SK-N-SH (cell line): ENCODE measurements at regions of chr9 and their contacts with region 1.

Region 1: GRCh38 chr9:109903515-109904138 is 123.6 kb downstream of the PALM2AKAP2 start:
- DNase-seq: peak; percentile 62
- H3K4me3 ChIP-seq: no peak overlapping the region; a peak in 1 of 4 replicates
- H3K27ac ChIP-seq: 0 out of 4 replicates have a peak overlapping the region, but pooled peaks of 1 of the 2 experiments have one; percentile 55
- H3K4me1 ChIP-seq: peaks cover 3 to 18% of the 10 kb centered on the region in 2 experiments
- H3K27me3 ChIP-seq: no peaks in the 10 kb centered on the region
- CTCF ChIP-seq: peak; percentile 93
- EP300 ChIP-seq: no peak
- RAD21 ChIP-seq: peak; percentile 93

Region 2: GRCh38 chr9:109717342-109717741 is 186.3 kb before region 1 on chr9:
- CTCF ChIA-PET with region 1: no interaction called
- POLR2A ChIA-PET with region 1: no interaction called
- DNase-seq: no peak
- H3K4me3 ChIP-seq: no peak overlapping the region
- H3K27ac ChIP-seq: no peak overlapping the region
- H3K4me1 ChIP-seq: no peaks in the 10 kb centered on the region
- H3K27me3 ChIP-seq: no peaks in the 10 kb centered on the region; the same call in 1 of the 2 replicates
- CTCF ChIP-seq: no peak
- EP300 ChIP-seq: no peak
- RAD21 ChIP-seq: no peak

Region 3: DNA sequence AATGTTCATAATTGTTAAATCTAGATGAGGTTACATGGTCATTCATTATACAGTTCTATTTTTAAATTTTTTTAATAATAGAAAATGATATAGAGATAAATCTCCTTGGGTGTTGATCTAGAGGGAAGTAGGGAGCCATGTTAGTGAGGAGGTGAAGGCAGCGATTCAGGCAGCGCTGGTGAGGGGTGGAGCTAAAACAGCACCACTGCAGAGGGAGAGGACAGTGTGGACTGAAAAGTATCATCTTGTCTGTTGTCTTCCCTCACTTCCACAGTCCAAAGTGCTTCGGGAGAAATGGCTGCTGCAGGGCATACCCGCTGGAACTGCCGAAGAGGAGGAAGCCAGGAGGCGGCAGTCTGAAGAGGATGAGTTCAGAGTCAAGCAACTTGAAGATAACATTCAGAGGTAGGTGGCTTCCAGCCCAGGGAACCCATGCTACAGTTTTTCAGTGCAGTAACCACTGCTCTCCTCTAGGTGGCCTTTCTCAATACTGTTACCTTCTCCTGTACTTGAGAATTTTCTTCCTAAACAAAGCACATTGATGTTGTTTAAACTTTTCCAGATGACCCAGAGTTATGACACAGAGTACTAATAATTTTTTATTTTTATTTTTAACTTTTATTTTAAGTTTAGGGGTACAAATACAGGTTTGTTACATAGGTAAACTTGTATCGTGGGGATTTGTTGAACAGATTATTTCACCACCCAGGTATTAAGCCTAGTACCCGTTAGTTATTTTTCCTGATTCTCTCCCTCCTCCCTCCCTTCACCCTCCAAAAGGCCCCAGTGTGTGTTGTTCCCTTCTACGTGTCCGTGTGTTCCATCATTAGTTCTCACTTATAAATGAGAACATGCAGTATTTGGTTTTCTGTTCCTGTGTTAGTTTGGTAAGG is 23.1 kb before region 1 on chr9:
- CTCF ChIA-PET with region 1: interaction called, 11 read pairs
- POLR2A ChIA-PET with region 1: no interaction called
- DNase-seq: peak; percentile 28
- H3K4me3 ChIP-seq: peak overlapping the region in 1 of 2 experiments; percentile 6; a peak in 1 of 4 replicates
- H3K27ac ChIP-seq: no peak overlapping the region
- H3K4me1 ChIP-seq: no peaks in the 10 kb centered on the region; a peak in 1 of 4 replicates
- H3K27me3 ChIP-seq: no peaks in the 10 kb centered on the region
- CTCF ChIP-seq: peak; percentile 72
- EP300 ChIP-seq: no peak
- RAD21 ChIP-seq: peak; percentile 27; the same call in 1 of the 2 replicates

Region 4: DNA sequence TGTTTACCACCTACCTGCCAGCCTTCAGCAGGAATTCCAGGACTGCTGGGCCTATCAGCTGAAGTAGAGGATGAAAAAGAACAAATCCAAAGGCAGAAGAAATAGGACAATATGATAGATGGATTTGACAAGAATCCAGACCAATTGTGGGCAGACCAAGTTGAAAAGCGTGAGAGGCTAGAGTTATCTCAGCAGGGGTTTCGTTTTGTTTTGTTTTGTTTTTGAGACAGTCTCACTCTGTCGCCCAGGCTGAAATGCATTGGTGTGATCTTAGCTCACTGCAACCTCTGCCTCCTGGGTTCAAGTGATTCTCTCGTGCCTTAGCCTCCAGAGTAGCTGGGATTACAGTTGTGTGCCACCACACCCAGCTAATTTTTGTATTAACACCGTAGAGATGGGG is 10.4 kb before region 1 on chr9:
- CTCF ChIA-PET with region 1: interaction called, 13 read pairs
- POLR2A ChIA-PET with region 1: no interaction called
- DNase-seq: no peak
- H3K4me3 ChIP-seq: no peak overlapping the region
- H3K27ac ChIP-seq: peak overlapping the region in 1 of 2 experiments; percentile 80; a peak in 1 of 4 replicates
- H3K4me1 ChIP-seq: peaks cover 0 to 4% of the 10 kb centered on the region in 2 experiments; a peak in 1 of 4 replicates
- H3K27me3 ChIP-seq: no peaks in the 10 kb centered on the region
- CTCF ChIP-seq: no peak
- EP300 ChIP-seq: no peak
- RAD21 ChIP-seq: no peak

Region 5: GRCh38 chr9:109923471-109923760 is 19.8 kb after region 1 on chr9:
- CTCF ChIA-PET with region 1: interaction called, 12 read pairs
- POLR2A ChIA-PET with region 1: no interaction called
- DNase-seq: no peak
- H3K4me3 ChIP-seq: no peak overlapping the region
- H3K27ac ChIP-seq: no peak overlapping the region
- H3K4me1 ChIP-seq: no peaks in the 10 kb centered on the region
- H3K27me3 ChIP-seq: no peaks in the 10 kb centered on the region
- CTCF ChIP-seq: no peak
- EP300 ChIP-seq: no peak
- RAD21 ChIP-seq: no peak

Region 6: GRCh38 chr9:110143950-110144545 is 240.4 kb after region 1 on chr9:
- CTCF ChIA-PET with region 1: interaction called, 179 read pairs
- POLR2A ChIA-PET with region 1: no interaction called
- DNase-seq: no peak
- H3K4me3 ChIP-seq: no peak overlapping the region
- H3K27ac ChIP-seq: peak overlapping the region in 1 of 2 experiments; percentile 18; a peak in 1 of 4 replicates
- H3K4me1 ChIP-seq: peaks cover 4 to 35% of the 10 kb centered on the region in 2 experiments; a peak in 3 of 4 replicates
- H3K27me3 ChIP-seq: no peaks in the 10 kb centered on the region
- CTCF ChIP-seq: no peak
- EP300 ChIP-seq: no peak
- RAD21 ChIP-seq: no peak